ENCODE measurements at regions of chr5 and their contacts with region 1.

Region 1: DNA sequence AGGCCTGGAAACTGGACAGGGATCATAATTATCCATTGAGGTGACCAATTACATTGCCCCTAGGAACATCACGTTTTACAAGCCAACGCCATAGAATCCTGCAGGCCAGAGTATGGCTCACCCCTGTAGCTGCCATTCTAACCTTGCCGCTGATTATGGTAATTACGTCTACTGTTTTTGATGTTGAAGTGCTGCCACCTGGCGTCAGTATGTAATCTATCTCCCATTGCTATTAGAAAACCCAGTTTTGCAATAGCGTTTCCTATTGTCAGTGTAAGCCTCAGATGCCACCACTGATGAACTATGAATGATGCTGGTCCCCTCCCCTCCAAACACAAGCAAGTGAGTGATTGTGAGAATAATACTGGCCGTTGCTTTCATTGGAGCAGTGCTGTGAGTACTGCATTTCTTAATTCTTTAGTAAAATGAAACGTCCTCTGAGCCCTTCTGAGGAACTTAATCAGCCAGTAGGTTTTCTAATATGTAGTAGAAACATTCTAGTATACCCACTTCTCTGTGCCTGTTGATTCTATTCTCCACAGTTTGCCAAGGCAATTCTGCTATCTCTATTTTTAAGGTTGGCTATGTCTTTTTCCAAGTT is 100.5 kb upstream of the NMUR2 start:
- DNase-seq: peak; percentile 39
- ATAC-seq: peak; percentile 88

Region 2: GRCh38 chr5:152379331-152379730 is 126.2 kb before region 1 on chr5:
- intact Hi-C with region 1: loop called (anchors 2 kb)
- DNase-seq: no peak
- ATAC-seq: no peak